ENCODE measurements at regions of chr18 and their contacts with region 1.

Region 1: DNA sequence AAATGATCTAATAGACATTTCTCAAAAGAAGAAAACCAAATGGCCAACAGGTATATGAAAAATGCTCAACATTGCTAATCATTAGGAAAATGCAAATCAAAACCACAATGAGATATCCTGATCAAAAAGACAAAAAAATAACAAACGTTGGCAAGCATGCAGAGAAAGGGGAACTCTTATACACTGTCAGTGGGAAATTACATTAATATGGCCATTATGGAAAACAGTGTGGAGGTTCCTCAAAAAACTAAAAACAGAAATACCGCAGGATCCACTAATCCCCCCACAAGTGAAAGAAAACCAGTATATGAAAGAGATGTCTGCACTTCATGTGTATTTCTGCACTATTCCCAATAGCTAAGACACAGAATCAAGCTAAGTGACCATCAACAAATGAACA is 57.7 kb upstream of the CTIF start:
- DNase-seq: no peak
- ATAC-seq: no peak
- H3K4me3 ChIP-seq: no peak overlapping the region
- H3K27ac ChIP-seq: no peak overlapping the region
- H3K4me1 ChIP-seq: no peaks in the 10 kb centered on the region; the same call in 1 of the 2 replicates
- H3K27me3 ChIP-seq: no peaks in the 10 kb centered on the region
- CTCF ChIP-seq: no peak
- POLR2A ChIP-seq: no peak
- RAD21 ChIP-seq: no peak

Region 2: GRCh38 chr18:48529796-48530195 is 48.7 kb after region 1 on chr18:
- CTCF ChIA-PET with region 1: interaction called, 3 read pairs
- POLR2A ChIA-PET with region 1: no interaction called
- dilution Hi-C with region 1: no loop called
- in situ Hi-C with region 1: loop called (anchors 5 kb)
- intact Hi-C with region 1: no loop called
- DNase-seq: peak; percentile 77
- ATAC-seq: peak; percentile 79
- H3K4me3 ChIP-seq: no peak overlapping the region
- H3K27ac ChIP-seq: no peak overlapping the region
- H3K4me1 ChIP-seq: peaks cover 13% of the 10 kb centered on the region
- H3K27me3 ChIP-seq: peaks cover 9% of the 10 kb centered on the region
- CTCF ChIP-seq: no peak
- POLR2A ChIP-seq: no peak
- RAD21 ChIP-seq: no peak